MCF 10A (cell line): ENCODE measurements at regions of chr20 and their contacts with region 1.

Region 1: GRCh38 chr20:50987592-50988210 is 29.1 kb downstream of the MOCS3 start:
- DNase-seq: peak; percentile 90
- H3K4me3 Mint-ChIP-seq: no peak overlapping the region
- H3K27ac Mint-ChIP-seq: no peak overlapping the region
- H3K4me1 Mint-ChIP-seq: peaks cover 12% of the 10 kb centered on the region
- H3K27me3 Mint-ChIP-seq: no peaks in the 10 kb centered on the region
- CTCF ChIP-seq: peak; percentile 94

Region 2: GRCh38 chr20:50655311-50655880 is 332.3 kb before region 1 on chr20:
- CTCF ChIA-PET with region 1: no interaction called
- POLR2A ChIA-PET with region 1: no interaction called
- intact Hi-C with region 1: no loop called
- DNase-seq: no peak
- H3K4me3 Mint-ChIP-seq: no peak overlapping the region
- H3K27ac Mint-ChIP-seq: no peak overlapping the region
- H3K4me1 Mint-ChIP-seq: peaks cover 6% of the 10 kb centered on the region
- H3K27me3 Mint-ChIP-seq: no peaks in the 10 kb centered on the region
- CTCF ChIP-seq: no peak

Region 3: DNA sequence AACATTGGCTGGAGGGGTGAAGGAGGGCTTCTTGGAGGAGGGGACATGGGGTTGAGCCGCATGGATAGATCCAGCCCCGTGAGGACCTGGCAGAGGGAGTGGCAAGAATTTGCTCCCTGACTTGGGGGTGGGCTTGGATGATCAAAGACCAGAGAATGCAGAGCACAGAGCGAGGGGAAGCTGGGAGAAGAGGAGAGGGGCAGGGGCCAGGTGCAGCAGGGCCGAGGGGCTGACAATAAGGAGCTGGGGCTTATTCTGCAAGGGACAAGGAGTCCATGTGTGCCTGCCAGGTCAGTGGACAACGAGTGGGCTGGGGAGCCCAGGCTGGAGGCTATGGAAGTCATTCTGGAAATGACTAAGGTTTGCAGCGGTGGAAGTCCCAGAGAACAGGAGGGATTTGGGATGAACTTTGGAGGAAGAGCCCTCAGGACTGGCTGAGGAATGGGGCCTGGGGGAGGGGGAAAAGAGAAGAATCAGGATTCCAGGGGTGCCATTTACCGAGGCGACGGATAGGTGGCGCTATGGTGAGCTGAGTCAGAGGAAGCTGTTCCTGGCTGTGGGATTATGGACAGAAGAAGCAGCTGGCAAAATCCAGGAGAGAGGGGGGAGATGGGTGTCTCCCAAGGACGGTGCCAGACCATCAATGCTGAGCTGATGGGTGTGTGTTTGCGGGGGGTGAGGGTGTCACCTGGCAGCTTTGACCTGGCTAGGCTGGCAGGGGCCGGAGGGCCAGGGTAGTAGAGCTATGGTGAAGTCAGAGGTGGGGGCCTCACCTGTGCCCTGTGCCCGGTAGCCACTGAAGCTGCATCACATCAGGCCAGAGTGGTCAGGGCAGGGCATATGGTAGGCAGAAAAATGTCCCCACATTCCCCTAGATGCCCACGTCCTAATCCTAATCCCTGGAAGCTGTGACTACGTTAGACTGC is 27.4 kb after region 1 on chr20:
- CTCF ChIA-PET with region 1: interaction called, 15 read pairs
- POLR2A ChIA-PET with region 1: no interaction called
- intact Hi-C with region 1: no loop called
- DNase-seq: peak; percentile 63
- H3K4me3 Mint-ChIP-seq: no peak overlapping the region
- H3K27ac Mint-ChIP-seq: no peak overlapping the region
- H3K4me1 Mint-ChIP-seq: peaks cover 10% of the 10 kb centered on the region
- H3K27me3 Mint-ChIP-seq: no peaks in the 10 kb centered on the region
- CTCF ChIP-seq: peak; percentile 71

Region 4: DNA sequence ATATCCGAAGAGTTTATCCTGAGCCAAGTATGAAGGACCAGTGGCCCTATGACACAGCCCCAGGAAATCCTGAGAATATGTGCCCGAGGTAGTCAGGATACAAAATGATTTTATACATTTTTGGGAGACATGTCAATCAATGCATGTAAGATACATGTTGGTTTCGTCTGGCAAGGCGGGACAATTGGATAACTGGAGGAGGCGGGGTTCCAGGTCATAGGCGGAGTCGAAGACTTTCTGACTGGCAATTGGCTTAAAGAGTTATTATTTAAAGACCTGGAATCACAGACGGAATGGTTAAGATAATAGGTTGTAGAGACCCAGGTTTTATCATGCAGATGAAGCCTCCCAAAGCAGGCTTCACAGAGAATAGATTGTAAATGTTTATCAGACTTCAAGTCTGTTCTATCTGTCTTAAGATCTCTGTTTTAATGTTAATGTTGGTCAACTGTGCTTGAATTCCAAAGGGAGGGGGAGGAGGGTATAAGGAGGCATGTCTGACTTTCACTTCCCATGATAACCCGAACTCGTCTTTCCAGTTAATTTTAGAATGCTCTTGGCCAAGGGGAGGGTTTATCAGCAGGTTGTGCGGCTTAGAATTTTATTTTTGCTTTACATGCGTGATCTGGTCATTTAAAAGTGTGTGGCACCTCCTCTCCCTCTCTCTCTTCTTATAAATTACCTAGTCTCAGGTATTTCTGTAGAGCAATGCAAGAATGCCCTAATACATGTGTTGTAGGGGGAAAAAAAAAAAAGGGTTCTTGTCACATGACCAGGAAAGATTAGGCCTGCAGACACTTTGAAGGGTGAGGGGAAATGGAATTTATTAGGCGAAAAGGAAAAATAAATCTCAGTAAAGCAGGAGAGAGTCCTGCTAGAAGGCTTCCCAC is 324.1 kb after region 1 on chr20:
- CTCF ChIA-PET with region 1: interaction called, 810 read pairs
- POLR2A ChIA-PET with region 1: interaction called, 50 read pairs
- intact Hi-C with region 1: no loop called
- DNase-seq: no peak
- H3K4me3 Mint-ChIP-seq: no peak overlapping the region
- H3K27ac Mint-ChIP-seq: no peak overlapping the region
- H3K4me1 Mint-ChIP-seq: peaks cover 5% of the 10 kb centered on the region
- H3K27me3 Mint-ChIP-seq: no peaks in the 10 kb centered on the region
- CTCF ChIP-seq: no peak

Region 5: GRCh38 chr20:51372176-51372803 is 384.6 kb after region 1 on chr20:
- CTCF ChIA-PET with region 1: interaction called, 20 read pairs
- POLR2A ChIA-PET with region 1: no interaction called
- intact Hi-C with region 1: loop called (anchors 5 kb)
- DNase-seq: peak; percentile 75
- H3K4me3 Mint-ChIP-seq: no peak overlapping the region
- H3K27ac Mint-ChIP-seq: no peak overlapping the region
- H3K4me1 Mint-ChIP-seq: no peaks in the 10 kb centered on the region
- H3K27me3 Mint-ChIP-seq: no peaks in the 10 kb centered on the region
- CTCF ChIP-seq: peak; percentile 90

Region 6: GRCh38 chr20:51624157-51624731 is 636.5 kb after region 1 on chr20:
- CTCF ChIA-PET with region 1: interaction called, 12 read pairs
- POLR2A ChIA-PET with region 1: interaction called, 4 read pairs
- intact Hi-C with region 1: loop called (anchors 2 kb)
- DNase-seq: peak; percentile 79
- H3K4me3 Mint-ChIP-seq: no peak overlapping the region
- H3K27ac Mint-ChIP-seq: no peak overlapping the region
- H3K4me1 Mint-ChIP-seq: no peaks in the 10 kb centered on the region
- H3K27me3 Mint-ChIP-seq: no peaks in the 10 kb centered on the region
- CTCF ChIP-seq: peak; percentile 58